ENCODE measurements at regions of chr17 and their contacts with region 1.

Region 1: DNA sequence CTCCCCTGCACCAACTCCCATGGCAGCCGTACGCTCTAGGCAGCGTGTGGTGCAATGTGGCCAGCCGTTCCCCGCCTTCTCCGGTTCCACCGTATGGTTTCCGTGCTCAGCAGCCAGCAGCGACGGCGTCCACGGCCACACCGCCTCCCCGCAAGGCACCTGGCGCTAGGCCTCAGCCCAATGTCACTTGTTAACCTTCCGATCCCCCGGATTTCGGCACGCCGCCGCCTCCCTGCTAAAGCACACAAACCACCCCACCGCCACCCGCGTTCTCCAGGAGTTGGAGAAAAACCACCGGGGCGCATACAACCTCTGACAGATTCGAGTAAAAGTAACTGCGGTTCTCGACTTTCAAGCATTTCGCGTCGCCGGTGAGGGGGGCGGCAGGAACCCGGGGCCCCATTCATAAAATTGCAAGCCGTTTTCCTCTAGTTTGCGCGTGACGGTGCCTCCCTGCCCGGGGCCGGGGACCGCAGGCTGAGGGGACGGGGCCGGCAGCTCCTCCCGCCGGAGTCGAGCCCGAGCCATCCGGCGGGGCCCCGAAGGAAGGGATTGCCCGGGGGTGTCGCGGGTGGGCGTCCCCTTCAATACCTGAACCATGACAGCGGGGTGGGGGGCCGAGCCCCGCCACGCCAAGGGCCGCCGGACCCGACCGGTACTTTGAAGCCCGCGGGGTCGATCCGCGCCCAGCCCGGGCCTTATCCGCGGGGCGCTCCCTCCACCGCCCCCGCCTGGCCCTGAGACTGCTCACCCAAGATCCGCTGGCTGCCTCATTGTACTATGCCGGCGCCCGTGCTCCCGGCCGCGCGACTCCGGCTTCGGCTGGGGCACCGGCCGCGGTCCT is at the start of gene TEX2:
- DNase-seq: peak; percentile 28
- ATAC-seq: 0 out of 2 replicates have a peak, but pooled peaks have one; percentile 2
- H3K4me3 Mint-ChIP-seq: peak within 1 kb of the TSS; percentile 96
- H3K27ac Mint-ChIP-seq: peak within 1 kb of the TSS; percentile 91
- H3K4me1 Mint-ChIP-seq: peaks cover 13% of the 10 kb centered on the region
- H3K27me3 Mint-ChIP-seq: peaks cover 37% of the 10 kb centered on the region
- CTCF ChIP-seq: no peak
- total RNA-seq, gene TEX2: 10.8 to 13.3 TPM (median 12.2 TPM) in 3 replicates

Region 2: DNA sequence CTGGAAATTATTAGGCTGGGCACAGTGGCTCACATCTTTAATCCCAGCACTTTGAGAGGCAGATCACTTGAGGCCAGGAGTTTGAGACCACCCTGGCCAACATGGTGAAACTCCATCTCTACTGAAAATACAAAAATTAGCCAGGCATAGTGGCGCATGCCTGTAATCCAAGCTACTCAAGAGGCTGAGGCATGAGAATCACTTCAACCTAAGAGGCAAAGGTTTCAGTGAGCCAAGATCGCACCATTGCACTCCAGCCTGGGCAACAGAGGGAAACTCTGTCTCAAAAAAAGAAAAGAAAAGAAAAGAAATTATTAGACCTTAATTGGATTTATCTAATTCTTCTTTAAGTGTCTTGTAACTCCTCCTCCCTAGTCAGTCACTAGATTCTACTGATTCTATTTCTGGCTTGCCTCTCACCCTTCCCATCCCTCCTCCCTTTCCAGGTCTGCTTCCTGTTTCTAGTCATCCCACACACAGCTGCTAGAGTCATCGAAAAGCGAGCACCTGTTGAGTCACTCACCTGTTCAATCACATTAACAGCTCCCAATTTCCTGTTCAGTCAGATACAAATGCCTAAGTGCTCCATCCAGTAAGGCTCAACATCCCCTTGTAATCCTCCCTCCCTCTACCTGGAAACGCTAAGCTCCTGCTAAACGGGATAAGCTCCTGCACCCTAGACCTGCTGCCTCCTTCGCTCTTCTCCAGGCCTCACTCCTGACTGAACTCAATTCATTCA is 167.3 kb before region 1 on chr17:
- CTCF ChIA-PET with region 1: no interaction called
- POLR2A ChIA-PET with region 1: interaction called, 12 read pairs
- DNase-seq: no peak
- ATAC-seq: peak; percentile 85
- H3K4me3 Mint-ChIP-seq: no peak overlapping the region
- H3K27ac Mint-ChIP-seq: peak overlapping the region; percentile 75
- H3K4me1 Mint-ChIP-seq: peaks cover 19% of the 10 kb centered on the region
- H3K27me3 Mint-ChIP-seq: no peaks in the 10 kb centered on the region
- CTCF ChIP-seq: no peak